ENCODE measurements at regions of chr17 and their contacts with region 1.

Region 1: GRCh38 chr17:5438716-5439445 is at the start of gene C1QBP:
- DNase-seq: peak; percentile 95
- H3K4me3 Mint-ChIP-seq: peak within 1 kb of the TSS; percentile 82
- H3K27ac Mint-ChIP-seq: peak within 1 kb of the TSS; percentile 83
- H3K4me1 Mint-ChIP-seq: peaks cover 43% of the 10 kb centered on the region
- H3K27me3 Mint-ChIP-seq: no peaks in the 10 kb centered on the region
- total RNA-seq, gene C1QBP: 342 TPM

Region 2: GRCh38 chr17:5249615-5250014 is 189.3 kb before region 1 on chr17:
- CTCF ChIA-PET with region 1: interaction called, 13 read pairs
- POLR2A ChIA-PET with region 1: no interaction called
- intact Hi-C with region 1: loop called (anchors 1 kb)
- DNase-seq: peak; percentile 73
- H3K4me3 Mint-ChIP-seq: no peak overlapping the region
- H3K27ac Mint-ChIP-seq: no peak overlapping the region
- H3K4me1 Mint-ChIP-seq: peaks cover 8% of the 10 kb centered on the region
- H3K27me3 Mint-ChIP-seq: no peaks in the 10 kb centered on the region

Region 3: DNA sequence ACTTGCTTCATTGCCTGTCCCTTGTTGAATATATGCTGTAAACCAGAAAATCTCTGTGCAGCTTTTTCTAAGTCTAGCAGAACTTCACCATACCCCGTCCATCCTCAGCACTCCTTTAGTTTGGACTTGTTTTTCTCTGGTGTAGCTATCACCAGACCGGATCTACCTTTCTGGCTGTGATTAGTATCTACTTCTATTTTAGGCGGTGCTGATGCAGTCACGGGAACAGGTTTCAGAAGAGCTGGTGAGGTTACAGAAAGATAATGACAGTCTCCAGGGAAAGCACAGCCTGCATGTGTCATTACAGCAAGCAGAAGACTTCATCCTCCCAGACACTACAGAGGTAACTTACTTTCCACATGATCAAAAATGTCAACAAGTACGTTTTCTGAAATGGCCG is 65.8 kb before region 1 on chr17:
- CTCF ChIA-PET with region 1: interaction called, 10 read pairs
- POLR2A ChIA-PET with region 1: no interaction called
- intact Hi-C with region 1: no loop called
- DNase-seq: no peak
- H3K4me3 Mint-ChIP-seq: no peak overlapping the region
- H3K27ac Mint-ChIP-seq: no peak overlapping the region
- H3K4me1 Mint-ChIP-seq: no peaks in the 10 kb centered on the region
- H3K27me3 Mint-ChIP-seq: no peaks in the 10 kb centered on the region

Region 4: DNA sequence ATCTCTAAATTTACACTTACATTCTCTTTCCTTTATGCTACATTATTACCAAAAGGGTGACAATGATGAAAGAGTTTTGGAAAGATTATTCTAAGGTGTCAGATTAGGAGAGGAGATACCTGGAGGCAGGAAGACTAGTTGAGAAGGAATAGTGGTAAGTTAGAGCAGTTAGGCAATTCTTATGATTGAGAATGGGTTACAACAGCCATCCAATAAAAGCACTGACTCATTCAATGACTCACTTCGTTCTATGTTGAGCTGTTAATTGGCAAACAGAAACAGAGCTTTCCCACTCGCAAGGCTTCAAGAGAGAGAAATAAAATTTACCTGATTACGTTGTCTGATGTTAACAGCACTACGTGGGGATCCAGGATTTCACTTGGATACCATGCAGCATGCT is 25.2 kb before region 1 on chr17:
- CTCF ChIA-PET with region 1: interaction called, 26 read pairs
- POLR2A ChIA-PET with region 1: interaction called, 30 read pairs
- intact Hi-C with region 1: no loop called
- DNase-seq: no peak
- H3K4me3 Mint-ChIP-seq: no peak overlapping the region
- H3K27ac Mint-ChIP-seq: peak overlapping the region; percentile 77
- H3K4me1 Mint-ChIP-seq: peaks cover 63% of the 10 kb centered on the region
- H3K27me3 Mint-ChIP-seq: no peaks in the 10 kb centered on the region

Region 5: GRCh38 chr17:5468075-5468473 is 29.2 kb after region 1 on chr17:
- CTCF ChIA-PET with region 1: interaction called, 14 read pairs
- POLR2A ChIA-PET with region 1: interaction called, 6 read pairs
- intact Hi-C with region 1: loop called (anchors 1 kb)
- DNase-seq: peak; percentile 30
- H3K4me3 Mint-ChIP-seq: peak overlapping the region; percentile 85
- H3K27ac Mint-ChIP-seq: peak overlapping the region; percentile 40
- H3K4me1 Mint-ChIP-seq: peaks cover 40% of the 10 kb centered on the region
- H3K27me3 Mint-ChIP-seq: no peaks in the 10 kb centered on the region

Measured in activated CD4-positive, alpha-beta memory T cell treated with anti-CD3 and anti-CD28 coated beads for 36 hours (primary cell).